Dendritic cell treated with granulocyte-macrophage colony-stimulating factor and Interleukin-4, amounts not matched to agents 40 ng/mL and 50 ng/mL, for 4 days (primary cell): ENCODE measurements at regions of chr1 and their contacts with region 1.

Region 1: DNA sequence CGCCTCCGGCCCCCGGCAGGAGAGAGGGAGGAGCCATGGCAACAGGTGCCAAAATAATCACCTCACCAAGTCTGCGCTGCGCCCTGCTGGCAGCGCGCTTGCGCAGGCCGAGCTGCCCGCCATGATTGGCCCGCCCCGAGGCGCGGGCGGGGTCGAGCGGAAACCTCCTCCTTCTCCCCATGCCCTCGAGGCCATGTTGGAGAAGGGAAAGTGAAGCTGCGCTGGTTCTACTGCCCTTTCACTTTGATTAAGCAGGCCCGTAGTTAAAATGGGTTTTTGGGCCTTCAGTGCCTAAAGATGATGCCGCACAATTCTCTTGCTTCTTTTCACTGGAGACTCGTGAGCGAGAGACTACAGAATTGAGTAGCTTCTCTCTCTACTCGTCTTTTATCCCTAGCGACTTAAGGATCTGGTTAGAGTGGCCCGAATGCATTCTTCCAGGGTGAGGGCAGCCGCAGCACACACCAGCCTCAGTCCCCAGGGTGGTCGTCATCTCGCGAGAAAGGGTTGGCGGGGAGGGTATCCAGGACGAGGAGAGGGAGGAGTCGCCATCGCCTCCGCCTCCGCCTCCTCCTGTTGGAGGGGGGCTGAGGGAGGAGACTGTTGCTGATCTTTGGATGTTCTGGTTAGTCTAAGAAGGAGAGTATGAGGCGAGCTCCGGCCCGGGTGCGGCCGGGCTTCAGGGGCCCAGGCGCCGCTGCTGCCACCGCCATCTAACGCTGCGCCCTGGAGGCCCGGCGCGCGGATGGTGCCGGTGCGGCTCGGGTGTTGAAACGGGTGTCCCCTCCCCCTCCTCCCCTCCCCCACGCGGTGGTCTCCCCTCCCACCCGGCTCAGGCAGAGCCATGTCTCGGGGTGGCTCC is at the start of gene DCAF6:
- H3K4me3 Mint-ChIP-seq: peak within 1 kb of the TSS; percentile 87
- H3K27ac Mint-ChIP-seq: peak within 1 kb of the TSS; percentile 86
- H3K4me1 Mint-ChIP-seq: peaks cover 39% of the 10 kb centered on the region
- H3K27me3 Mint-ChIP-seq: no peaks in the 10 kb centered on the region

Region 2: GRCh38 chr1:167715157-167715999 is 220.9 kb before region 1 on chr1:
- intact Hi-C with region 1: loop called (anchors 5 kb)
- H3K4me3 Mint-ChIP-seq: peak overlapping the region; percentile 99
- H3K27ac Mint-ChIP-seq: peak overlapping the region; percentile 95
- H3K4me1 Mint-ChIP-seq: peaks cover 54% of the 10 kb centered on the region
- H3K27me3 Mint-ChIP-seq: peaks cover 22% of the 10 kb centered on the region

Region 3: DNA sequence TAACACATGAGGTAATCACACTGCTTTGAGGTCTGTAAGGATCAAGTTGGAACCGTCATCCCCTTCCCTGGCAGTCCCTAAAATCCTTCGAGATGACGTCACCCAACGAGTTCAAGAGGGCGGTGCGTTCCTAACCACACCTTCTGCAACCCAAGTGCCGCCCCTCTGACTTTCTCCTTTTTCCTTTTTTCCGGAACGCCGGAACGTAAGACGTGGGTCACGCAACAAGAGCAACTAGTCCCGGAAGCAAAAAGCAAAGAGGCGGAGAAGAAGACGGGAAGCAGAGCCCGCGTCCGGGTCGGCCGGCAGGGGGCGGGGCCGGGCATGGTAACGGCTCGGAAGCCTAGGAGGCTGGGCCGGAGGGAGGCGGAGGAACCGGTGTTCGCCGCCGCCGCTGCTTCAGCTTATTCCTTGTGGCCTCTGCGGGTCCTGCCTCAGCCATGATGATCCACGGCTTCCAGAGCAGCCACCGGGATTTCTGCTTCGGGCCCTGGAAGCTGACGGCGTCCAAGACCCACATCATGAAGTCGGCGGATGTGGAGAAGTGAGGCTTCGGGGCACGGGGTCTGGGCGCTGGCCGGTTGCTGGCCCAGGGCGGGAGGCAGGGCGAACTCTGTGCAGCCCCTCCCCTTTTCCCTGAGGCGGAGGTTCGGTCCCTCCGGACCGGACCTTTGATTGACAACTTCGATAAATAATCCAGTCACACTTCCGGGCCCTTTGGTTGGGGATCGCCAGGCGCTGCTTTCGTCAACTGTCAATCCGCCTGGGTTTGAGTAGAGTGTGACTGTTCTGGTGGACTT is 242.5 kb after region 1 on chr1 and contains the start of gene TIPRL:
- intact Hi-C with region 1: loop called (anchors 2 kb)
- H3K4me3 Mint-ChIP-seq: no peak within 1 kb of the TSS
- H3K27ac Mint-ChIP-seq: no peak within 1 kb of the TSS
- H3K4me1 Mint-ChIP-seq: no peaks in the 10 kb centered on the region
- H3K27me3 Mint-ChIP-seq: peaks cover 6% of the 10 kb centered on the region

Region 4: DNA sequence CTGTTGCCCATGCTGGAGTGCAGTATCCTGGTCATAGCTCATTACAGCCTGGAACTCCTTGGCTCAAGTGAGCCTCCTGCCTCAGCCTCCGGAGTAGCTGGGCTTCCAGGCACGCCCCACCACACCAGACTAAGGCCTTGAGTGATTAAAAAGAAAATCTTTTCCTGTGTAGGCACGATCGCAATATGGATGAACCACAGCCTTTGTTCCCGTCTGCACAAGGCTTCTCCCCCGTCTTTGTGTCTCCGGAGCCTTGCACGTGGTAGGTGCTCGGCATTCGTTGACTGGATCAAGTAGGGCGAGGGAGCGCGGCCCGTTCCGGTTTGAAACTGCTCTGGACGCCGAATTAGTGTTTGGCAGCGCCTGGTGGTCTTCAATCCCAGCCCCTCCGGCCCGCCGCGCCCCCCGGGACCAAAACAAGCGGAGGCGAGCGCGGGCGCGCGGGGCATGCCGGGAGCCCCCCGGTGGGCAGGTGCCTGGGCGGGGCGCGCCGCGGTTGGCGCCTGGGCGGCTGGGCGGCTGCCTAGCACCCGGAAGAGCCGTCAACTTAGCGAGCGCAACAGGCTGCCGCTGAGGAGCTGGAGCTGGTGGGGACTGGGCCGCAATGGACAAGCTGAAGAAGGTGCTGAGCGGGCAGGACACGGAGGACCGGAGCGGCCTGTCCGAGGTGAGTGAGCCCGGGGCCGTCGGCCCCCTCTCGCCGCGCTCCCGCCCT is 289.3 kb after region 1 on chr1 and contains the start of gene SFT2D2:
- intact Hi-C with region 1: loop called (anchors 5 kb)
- H3K4me3 Mint-ChIP-seq: peak within 1 kb of the TSS; percentile 89
- H3K27ac Mint-ChIP-seq: peak within 1 kb of the TSS; percentile 92
- H3K4me1 Mint-ChIP-seq: peaks cover 55% of the 10 kb centered on the region
- H3K27me3 Mint-ChIP-seq: no peaks in the 10 kb centered on the region